ENCODE measurements at regions of chr1 and their contacts with region 1.

Region 1: DNA sequence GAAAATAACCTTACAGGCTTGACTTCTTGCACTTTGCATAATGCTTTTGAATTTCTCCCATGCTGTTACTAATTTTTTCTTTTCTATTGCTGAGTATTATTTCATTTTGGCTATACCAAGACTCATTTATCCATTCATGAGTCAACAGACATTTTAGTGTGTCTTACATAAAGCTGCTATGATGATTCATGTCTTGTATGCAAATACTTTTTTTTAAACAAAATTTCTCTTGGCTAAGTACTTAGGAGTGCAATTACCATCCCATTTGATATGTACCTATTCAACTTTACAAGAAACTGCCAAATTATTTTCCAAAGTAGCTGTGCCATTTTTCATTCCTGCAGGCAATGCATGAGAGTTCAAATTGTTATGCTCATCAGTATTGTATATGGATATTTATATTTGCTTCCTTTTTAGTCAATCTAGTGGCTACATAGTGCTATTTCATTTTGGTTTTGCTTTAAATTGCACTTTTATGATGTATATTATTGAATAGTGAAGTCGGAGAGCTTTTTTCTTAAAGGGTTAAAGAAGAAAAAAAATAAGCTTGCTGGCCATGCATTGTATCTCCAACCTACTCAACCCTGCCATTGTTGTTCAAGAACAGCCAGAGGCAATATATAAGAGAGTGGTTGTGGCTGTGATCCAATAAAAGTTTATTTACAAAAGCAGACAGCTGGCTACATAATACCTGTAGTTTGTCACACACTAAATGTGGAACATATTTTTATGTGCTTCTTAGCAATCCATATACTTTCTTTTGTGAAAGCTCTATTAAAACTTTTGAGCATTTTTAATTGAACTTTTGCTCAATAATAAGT is 862.8 kb downstream of the KCNT2 start:
- DNase-seq: peak; percentile 35
- H3K27ac ChIP-seq: no peak overlapping the region
- CTCF ChIP-seq: no peak

Region 2: GRCh38 chr1:195733826-195734225 is 11.6 kb before region 1 on chr1:
- CTCF ChIA-PET with region 1: interaction called, 14 read pairs
- POLR2A ChIA-PET with region 1: no interaction called
- DNase-seq: no peak
- H3K27ac ChIP-seq: no peak overlapping the region
- CTCF ChIP-seq: no peak

Region 3: GRCh38 chr1:195933835-195934234 is 188.4 kb after region 1 on chr1:
- CTCF ChIA-PET with region 1: no interaction called
- POLR2A ChIA-PET with region 1: no interaction called
- DNase-seq: no peak
- H3K27ac ChIP-seq: no peak overlapping the region
- CTCF ChIP-seq: no peak